Endothelial cell of umbilical vein (primary cell): ENCODE measurements at regions of chr7 and their contacts with region 1.

Region 1: DNA sequence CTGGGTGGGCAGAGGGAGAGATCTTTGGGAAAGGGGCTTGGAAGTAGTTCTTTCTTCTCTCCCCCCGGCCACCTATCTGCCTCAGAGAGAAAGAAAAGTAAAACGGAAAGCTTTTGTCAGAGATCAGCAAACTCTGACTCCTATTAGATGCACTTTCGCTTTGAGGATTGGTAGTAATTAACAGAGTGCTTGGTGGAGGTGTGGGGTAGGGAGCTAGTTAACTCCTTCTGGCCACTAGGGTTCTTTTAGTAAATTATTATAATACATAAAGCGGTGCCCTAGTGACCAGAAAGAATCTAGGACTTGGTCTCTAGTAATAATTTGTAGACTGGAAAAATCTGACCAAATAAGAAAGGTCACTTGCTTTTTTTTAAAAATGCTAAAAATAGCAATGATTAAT is 54.6 kb downstream of the CPVL start:
- DNase-seq: no peak
- H3K4me3 ChIP-seq: peak overlapping the region in 2 of 3 experiments; percentile 15 to 53
- H3K27ac ChIP-seq: no peak overlapping the region
- H3K4me1 ChIP-seq: peaks cover 6% of the 10 kb centered on the region
- H3K27me3 ChIP-seq: peaks cover 3 to 6% of the 10 kb centered on the region in 2 experiments
- CTCF ChIP-seq: no peak
- POLR2A ChIP-seq: no peak

Region 2: GRCh38 chr7:29035044-29035740 is 56.5 kb before region 1 on chr7:
- CTCF ChIA-PET with region 1: interaction called, 4 read pairs
- POLR2A ChIA-PET with region 1: no interaction called
- dilution Hi-C with region 1: no loop called
- intact Hi-C with region 1: loop called (anchors 1 kb)
- DNase-seq: peak; percentile 91
- H3K4me3 ChIP-seq: no peak overlapping the region
- H3K27ac ChIP-seq: peak overlapping the region; percentile 72
- H3K4me1 ChIP-seq: peaks cover 63% of the 10 kb centered on the region
- H3K27me3 ChIP-seq: no peaks in the 10 kb centered on the region
- CTCF ChIP-seq: no peak
- POLR2A ChIP-seq: peak; percentile 40

Region 3: GRCh38 chr7:29078311-29079260 is 13.1 kb before region 1 on chr7:
- CTCF ChIA-PET with region 1: interaction called, 26 read pairs
- POLR2A ChIA-PET with region 1: no interaction called
- dilution Hi-C with region 1: no loop called
- intact Hi-C with region 1: no loop called
- DNase-seq: no peak
- H3K4me3 ChIP-seq: no peak overlapping the region
- H3K27ac ChIP-seq: no peak overlapping the region
- H3K4me1 ChIP-seq: no peaks in the 10 kb centered on the region
- H3K27me3 ChIP-seq: peaks cover 2 to 5% of the 10 kb centered on the region in 2 experiments
- CTCF ChIP-seq: no peak
- POLR2A ChIP-seq: no peak